ENCODE measurements at regions of chr22 and their contacts with region 1.

Region 1: DNA sequence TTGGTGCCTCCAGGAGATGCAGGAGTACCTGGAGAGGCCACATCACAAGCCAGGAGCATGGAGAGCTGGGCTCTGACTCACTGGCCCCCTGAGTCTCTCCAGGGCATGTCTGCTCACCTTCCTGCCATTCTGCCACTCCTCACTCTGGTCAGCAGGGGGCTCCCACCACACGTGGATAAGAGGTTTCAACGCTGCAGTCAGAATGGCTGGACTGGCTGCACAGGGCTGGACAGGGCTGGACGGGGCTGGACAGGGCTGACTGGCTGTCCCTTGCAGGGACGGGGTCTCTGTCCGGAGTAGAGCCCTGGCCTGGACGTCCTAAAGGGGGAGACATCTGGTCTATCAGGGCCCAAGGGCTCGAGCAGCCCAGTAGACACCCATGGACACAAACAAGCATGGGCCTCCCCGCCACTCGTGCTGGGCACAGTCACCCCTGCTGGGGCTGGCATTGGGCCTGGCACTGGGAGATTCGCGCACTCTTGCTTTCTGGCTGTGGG is 34.6 kb downstream of the CYTH4 start:
- DNase-seq: peak; percentile 94
- H3K4me3 ChIP-seq: no peak overlapping the region
- H3K27ac ChIP-seq: no peak overlapping the region
- H3K4me1 ChIP-seq: peaks cover 0 to 9% (median 1%) of the 10 kb centered on the region in 4 donors
- H3K27me3 ChIP-seq: peaks cover 0 to 85% (median 0%) of the 10 kb centered on the region in 4 donors
- CTCF ChIP-seq: peak; percentile 67 to 78 (median 72)
- EP300 ChIP-seq: no peak
- POLR2A ChIP-seq: no peak

Region 2: GRCh38 chr22:37457093-37457893 is 140.4 kb after region 1 on chr22:
- intact Hi-C with region 1: loop called (anchors 10 kb)
- DNase-seq: no peak
- H3K4me3 ChIP-seq: no peak overlapping the region
- H3K27ac ChIP-seq: no peak overlapping the region
- H3K4me1 ChIP-seq: no peaks in the 10 kb centered on the region
- H3K27me3 ChIP-seq: peaks cover 0 to 80% (median 1%) of the 10 kb centered on the region in 4 donors
- CTCF ChIP-seq: peak; percentile 56 to 70 (median 62)
- EP300 ChIP-seq: no peak
- POLR2A ChIP-seq: no peak

Region 3: DNA sequence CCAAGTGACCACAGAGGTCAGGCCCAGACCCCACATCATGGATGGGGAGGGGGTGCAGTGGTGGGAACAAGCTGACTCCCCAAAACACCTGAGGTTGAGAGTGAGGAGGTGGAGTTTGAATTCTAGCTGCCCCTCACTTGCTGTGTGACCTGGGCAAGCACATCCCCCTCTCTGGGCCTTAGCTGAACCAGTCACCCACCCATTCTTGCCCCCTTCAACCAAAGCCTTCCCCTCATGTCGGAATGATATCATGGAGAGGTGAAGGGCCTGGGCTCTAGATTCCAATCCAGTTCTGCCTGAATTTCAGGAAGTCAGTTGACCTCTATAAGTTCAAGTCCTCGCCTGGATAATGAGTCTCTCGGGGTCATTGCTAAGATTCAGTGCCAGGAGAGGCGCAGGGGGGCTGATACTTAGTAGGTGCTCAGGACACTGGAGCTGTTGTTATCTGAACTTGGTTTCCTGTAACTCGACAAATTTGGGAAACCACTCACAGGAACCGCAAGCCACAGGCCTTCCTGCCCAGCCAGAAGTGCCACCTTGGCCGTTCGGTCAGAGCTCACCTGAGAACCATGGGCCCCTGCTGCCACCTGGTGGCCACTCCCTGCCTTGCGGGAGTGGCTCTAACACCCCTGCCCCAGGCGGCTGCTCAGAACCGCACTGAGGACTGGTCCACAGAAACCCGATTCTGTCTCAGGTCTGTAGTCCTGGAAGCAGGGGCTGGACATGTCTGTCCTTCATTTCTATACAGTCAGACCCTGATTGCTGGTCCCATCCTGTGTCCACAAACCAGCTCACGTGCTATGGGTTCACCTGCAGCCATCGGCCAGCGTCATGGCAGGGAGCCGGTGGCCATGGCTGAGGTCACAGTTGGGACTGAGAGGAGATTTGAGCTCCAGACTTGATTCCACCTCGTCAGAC is 250.2 kb after region 1 on chr22:
- intact Hi-C with region 1: loop called (anchors 10 kb)
- DNase-seq: peak; percentile 96
- H3K4me3 ChIP-seq: no peak overlapping the region
- H3K27ac ChIP-seq: peak overlapping the region; percentile 15 to 64 (median 53)
- H3K4me1 ChIP-seq: peaks cover 57 to 81% (median 69%) of the 10 kb centered on the region in 4 donors
- H3K27me3 ChIP-seq: peaks cover 0 to 23% (median 0%) of the 10 kb centered on the region in 4 donors
- CTCF ChIP-seq: peak; percentile 91 to 98 (median 94)
- EP300 ChIP-seq: no peak
- POLR2A ChIP-seq: no peak

Region 4: DNA sequence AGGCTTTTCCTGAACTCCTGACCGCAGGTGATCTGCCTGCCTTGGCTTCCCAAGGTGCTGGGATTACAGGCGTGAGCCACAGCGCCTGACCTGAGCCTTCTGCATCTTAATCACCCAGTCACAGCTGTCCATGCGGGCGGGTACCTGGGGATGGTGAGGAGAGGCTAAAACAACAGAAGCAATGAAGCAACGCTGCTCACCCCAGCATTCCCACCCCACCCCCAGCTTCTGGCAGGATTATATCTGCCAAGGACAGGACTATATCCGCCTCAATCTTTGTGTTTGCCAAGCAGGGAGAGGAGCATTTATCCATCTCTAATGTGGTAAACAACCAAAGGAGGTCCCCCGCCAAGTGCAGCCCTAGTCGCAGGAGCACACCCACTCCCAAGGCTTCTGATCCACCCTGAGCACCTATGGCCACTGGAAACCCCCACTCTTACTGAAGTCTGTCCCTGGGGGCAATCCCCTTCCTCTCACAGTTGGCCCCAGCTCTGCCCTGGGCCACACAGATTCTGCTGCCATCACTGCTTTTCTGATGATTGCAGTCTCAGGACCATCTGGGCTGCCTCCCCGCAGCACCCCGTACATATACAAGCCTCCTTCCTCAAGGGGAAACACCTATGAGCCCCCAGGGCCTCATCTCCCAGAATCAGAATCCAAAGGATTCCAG is 271.8 kb after region 1 on chr22:
- intact Hi-C with region 1: no loop called
- DNase-seq: no peak
- H3K4me3 ChIP-seq: no peak overlapping the region
- H3K27ac ChIP-seq: no peak overlapping the region
- H3K4me1 ChIP-seq: peaks cover 0 to 11% (median 3%) of the 10 kb centered on the region in 4 donors
- H3K27me3 ChIP-seq: no peaks in the 10 kb centered on the region
- CTCF ChIP-seq: no peak
- EP300 ChIP-seq: no peak
- POLR2A ChIP-seq: no peak

Measured in esophagus muscularis mucosa (tissue), 4 donors.